ENCODE measurements at regions of chr16 and their contacts with region 1.

Region 1: DNA sequence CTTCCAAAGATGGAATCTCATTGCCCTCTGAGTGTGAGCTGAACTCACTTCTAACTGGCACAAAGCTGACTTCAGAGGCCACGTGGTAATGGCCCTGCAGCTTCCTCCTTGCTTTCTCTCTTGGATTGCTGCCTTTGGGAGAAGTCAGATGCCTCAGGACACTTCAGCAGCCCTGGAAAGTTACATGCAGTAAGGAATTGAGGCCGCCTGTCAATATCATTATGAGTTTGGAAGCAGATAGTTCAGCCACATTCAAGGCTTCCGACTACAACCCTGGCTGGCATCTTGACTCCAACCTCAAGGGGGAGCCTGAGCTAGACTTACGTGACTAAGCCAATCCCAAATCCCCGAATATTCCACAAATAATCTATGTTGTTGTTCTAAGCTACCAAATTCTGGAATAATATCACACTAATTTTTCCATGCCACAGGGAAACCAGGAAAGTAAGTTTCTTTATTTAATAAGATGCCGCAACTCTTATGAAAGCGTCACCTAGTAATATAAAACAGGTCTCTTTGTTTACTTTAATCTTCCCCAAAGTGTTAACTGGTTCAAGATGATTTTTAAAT is 13.6 kb downstream of the CEP20 start:
- DNase-seq: peak; percentile 51
- ATAC-seq: peak; percentile 90

Region 2: DNA sequence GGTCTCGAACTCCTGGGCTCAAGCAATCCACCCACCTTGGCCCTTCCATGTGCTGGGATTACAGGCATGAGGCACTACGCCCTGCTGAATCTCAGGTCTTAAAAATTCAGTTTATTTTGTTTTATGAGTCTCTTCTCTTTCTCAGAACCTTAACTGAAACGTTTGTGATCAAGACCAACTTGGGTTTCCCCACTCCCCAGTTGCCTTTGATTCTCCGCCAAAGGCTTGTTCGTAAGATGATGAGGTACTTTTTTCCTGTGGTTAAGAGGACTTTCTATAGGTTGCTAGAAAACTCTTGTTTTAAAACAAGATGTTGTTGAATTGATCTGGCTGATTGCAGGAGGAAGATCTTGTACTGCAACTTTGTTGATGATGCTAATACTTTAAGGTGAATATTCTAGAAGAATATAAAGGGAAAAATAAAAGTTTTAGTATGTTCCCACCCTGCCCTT is 86.3 kb after region 1 on chr16:
- intact Hi-C with region 1: no loop called
- DNase-seq: no peak
- ATAC-seq: no peak

Region 3: DNA sequence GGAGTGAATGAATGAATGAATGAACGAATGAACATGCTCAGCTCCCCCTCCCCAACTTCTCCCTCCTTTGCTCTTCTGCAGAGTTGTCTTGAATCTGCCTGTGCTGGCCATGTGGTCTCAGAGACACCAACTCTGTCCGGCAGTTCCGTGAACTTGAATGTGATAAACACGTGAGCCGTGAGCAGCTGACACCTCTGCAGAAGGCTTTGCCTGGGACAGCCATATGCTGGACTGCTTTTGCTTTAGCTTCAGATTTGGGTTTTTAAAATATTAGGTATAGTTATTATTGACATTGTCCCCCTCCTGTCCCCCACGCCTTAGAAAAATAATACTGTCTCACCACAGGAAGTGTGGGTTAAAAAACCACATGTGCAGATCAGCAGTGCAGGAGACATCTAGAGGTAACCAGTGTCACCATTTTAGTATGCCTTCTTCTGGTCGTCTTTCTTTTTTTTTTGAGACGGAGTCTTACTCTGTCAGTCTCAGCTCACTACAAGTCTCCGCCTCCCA is 158.4 kb after region 1 on chr16:
- intact Hi-C with region 1: loop called (anchors 10 kb)
- DNase-seq: no peak
- ATAC-seq: peak; percentile 40

Region 4: DNA sequence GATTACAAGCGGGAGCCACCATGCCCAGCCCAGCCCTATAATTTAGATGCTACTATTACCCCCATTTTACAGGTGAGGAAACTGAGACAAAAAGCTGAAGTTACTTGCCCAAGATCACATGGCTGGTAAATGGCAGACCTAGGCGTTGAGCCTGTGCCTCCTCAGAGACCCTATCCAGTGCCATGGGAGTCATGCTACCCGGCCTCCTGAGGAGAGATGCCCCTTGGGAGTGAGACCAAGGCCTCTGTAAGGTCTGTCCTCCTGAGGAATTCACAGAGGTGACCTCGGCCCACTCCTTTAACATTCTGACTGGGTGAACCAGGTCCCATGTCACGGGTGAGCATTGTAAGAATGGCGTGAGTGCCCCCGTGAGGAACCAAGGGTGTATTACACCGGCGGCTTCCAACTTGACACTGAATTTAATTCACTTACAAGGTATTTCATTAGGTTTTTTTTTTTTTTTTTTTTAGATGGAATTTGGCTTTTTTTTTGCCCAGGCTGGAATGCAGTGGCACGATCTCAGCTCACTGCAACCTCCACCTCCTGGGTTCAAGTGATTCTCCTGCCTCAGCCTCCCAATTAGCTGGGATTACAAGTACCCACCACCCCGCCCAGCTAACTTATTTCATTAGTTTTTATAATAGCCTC is 252.8 kb after region 1 on chr16:
- intact Hi-C with region 1: loop called (anchors 5 kb)
- DNase-seq: peak; percentile 69
- ATAC-seq: peak; percentile 90